ENCODE measurements at regions of chr3 and their contacts with region 1.

Region 1: GRCh38 chr3:170869645-170870593 is at the start of gene RPL22L1:
- DNase-seq: peak; percentile 95
- H3K4me3 Mint-ChIP-seq: peak within 1 kb of the TSS; percentile 92
- H3K27ac Mint-ChIP-seq: peak within 1 kb of the TSS; percentile 92
- H3K4me1 Mint-ChIP-seq: peaks cover 25% of the 10 kb centered on the region
- H3K27me3 Mint-ChIP-seq: no peaks in the 10 kb centered on the region
- total RNA-seq, gene RPL22L1: 98.9 to 99.2 TPM

Region 2: GRCh38 chr3:170357176-170357919 is 512.6 kb before region 1 on chr3 and contains the start of gene SKIL:
- CTCF ChIA-PET with region 1: no interaction called
- POLR2A ChIA-PET with region 1: interaction called, 13 read pairs
- DNase-seq: peak; percentile 95
- H3K4me3 Mint-ChIP-seq: peak within 1 kb of the TSS; percentile 84
- H3K27ac Mint-ChIP-seq: peak within 1 kb of the TSS; percentile 95
- H3K4me1 Mint-ChIP-seq: peaks cover 41% of the 10 kb centered on the region
- H3K27me3 Mint-ChIP-seq: peaks cover 5% of the 10 kb centered on the region
- total RNA-seq, gene SKIL: 18.0 to 19.0 TPM

Region 3: GRCh38 chr3:170469151-170470062 is 400.5 kb before region 1 on chr3:
- CTCF ChIA-PET with region 1: no interaction called
- POLR2A ChIA-PET with region 1: no interaction called
- DNase-seq: no peak
- H3K4me3 Mint-ChIP-seq: no peak overlapping the region
- H3K27ac Mint-ChIP-seq: no peak overlapping the region
- H3K4me1 Mint-ChIP-seq: peaks cover 7% of the 10 kb centered on the region
- H3K27me3 Mint-ChIP-seq: peaks cover 29% of the 10 kb centered on the region

Region 4: DNA sequence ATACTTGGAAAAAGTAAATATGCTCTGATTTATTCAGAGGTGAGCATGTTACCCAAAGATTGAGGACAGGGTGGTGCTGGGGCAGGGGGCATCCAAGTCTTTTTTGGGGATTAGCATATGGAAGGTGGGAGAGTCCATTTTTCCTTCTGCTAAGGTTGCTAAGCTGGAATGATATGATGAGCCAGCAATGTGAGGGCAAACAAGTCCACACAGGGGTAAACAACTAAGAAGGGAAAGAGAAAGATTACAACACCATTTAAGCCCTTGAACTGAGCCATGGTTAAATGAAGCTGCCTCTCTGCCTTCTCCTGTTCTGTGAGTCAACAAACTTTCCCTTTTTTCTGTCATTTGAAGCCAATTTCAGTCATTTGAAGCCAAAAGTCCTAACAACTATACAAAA is 89.0 kb before region 1 on chr3:
- CTCF ChIA-PET with region 1: no interaction called
- POLR2A ChIA-PET with region 1: no interaction called
- DNase-seq: no peak
- H3K4me3 Mint-ChIP-seq: no peak overlapping the region
- H3K27ac Mint-ChIP-seq: no peak overlapping the region
- H3K4me1 Mint-ChIP-seq: no peaks in the 10 kb centered on the region
- H3K27me3 Mint-ChIP-seq: peaks cover 35% of the 10 kb centered on the region

Region 5: GRCh38 chr3:170848292-170848917 is 21.5 kb before region 1 on chr3:
- CTCF ChIA-PET with region 1: interaction called, 3 read pairs
- POLR2A ChIA-PET with region 1: interaction called, 12 read pairs
- DNase-seq: no peak
- H3K4me3 Mint-ChIP-seq: no peak overlapping the region
- H3K27ac Mint-ChIP-seq: no peak overlapping the region
- H3K4me1 Mint-ChIP-seq: no peaks in the 10 kb centered on the region
- H3K27me3 Mint-ChIP-seq: peaks cover 32% of the 10 kb centered on the region

Region 6: DNA sequence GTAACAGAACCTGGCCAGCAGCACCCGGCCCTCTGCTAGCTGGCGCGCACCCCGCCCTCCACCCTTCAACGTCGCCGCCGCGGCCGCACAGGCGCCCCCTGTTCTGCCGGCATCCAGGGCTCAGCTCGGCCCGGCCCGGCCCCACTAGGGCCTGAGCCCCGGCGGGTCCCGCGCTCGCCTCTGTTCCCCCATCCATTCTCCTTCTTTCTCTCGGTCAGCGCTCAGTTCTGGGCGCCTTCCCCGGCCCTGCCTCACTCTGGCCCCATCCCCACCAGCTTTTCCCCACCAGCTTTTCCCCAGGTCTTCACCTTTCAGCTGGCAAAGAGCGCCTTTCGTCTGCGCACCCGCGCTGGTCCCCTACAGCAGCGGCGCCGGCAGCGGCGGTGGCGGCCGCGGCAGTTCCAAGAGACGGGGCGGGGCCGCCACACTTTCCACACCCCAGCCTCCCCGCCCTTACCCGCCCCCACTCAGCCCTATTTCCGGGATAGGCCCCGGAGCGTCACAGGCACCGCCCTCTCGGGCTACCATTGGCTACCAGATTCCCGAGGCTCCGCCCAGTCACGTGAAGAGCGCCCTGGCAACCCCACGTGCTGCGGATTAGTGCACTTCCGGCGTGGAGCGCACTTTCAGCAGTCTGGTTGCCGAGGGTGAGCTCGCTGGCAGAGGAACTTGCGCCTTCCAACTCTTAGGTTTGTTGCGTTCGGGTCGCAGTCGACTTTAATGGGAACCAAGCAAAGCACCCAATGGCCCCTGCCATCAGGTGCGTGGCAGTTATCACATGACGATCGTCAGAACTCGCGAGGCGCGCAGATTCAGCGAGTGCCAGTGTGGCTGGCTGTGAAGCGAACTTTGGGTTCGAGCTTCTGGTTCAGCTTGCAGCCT is 38.6 kb after region 1 on chr3 and contains the start of gene EIF5A2:
- CTCF ChIA-PET with region 1: interaction called, 8 read pairs
- POLR2A ChIA-PET with region 1: interaction called, 52 read pairs
- DNase-seq: peak; percentile 96
- H3K4me3 Mint-ChIP-seq: peak within 1 kb of the TSS; percentile 96
- H3K27ac Mint-ChIP-seq: peak within 1 kb of the TSS; percentile 84
- H3K4me1 Mint-ChIP-seq: peaks cover 28% of the 10 kb centered on the region
- H3K27me3 Mint-ChIP-seq: peaks cover 19% of the 10 kb centered on the region
- total RNA-seq, gene EIF5A2: 13.0 to 15.5 TPM